ENCODE measurements at regions of chr6 and their contacts with region 1.

Region 1: GRCh38 chr6:26157977-26158648 is 70.9 kb downstream of the HFE start:
- DNase-seq: peak; percentile 92
- H3K4me3 Mint-ChIP-seq: peak overlapping the region; percentile 79
- H3K27ac Mint-ChIP-seq: peak overlapping the region; percentile 97
- H3K4me1 Mint-ChIP-seq: peaks cover 50% of the 10 kb centered on the region
- H3K27me3 Mint-ChIP-seq: peaks cover 13% of the 10 kb centered on the region

Region 2: DNA sequence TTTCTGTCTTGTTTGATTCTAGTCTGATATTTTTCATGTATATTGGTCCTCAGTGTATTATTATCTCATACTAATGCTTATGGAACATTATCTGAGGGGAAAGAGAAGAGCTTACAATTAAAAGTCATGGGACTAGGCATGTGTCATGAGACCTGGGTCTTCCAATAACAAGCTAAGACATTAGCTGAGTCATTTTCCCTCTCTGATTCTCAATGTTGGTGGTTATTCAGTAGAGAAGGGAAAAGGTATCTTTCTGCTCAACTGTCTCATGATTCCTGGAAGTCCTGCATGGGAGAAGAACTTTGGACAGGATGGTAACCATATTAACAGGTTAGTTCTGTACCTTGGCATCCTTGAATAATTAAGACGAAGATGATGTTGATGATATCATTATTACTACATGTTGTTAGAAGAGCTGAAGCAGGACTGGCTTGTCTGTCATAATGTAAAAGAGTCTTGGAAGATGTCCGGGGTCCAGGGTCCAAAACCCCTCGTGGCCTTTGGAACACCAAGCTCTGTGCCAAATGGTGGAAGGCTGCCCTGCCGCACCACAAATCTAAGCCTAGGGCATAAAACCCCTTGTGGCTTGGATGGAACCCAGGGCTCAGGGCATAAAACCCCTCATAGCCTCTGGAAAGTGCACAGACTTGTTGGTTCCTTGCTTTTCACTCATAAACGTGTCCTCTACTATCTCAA is 176.4 kb before region 1 on chr6:
- CTCF ChIA-PET with region 1: no interaction called
- intact Hi-C with region 1: no loop called
- DNase-seq: no peak
- H3K4me3 Mint-ChIP-seq: no peak overlapping the region
- H3K27ac Mint-ChIP-seq: peak overlapping the region; percentile 17
- H3K4me1 Mint-ChIP-seq: peaks cover 23% of the 10 kb centered on the region
- H3K27me3 Mint-ChIP-seq: no peaks in the 10 kb centered on the region

Region 3: DNA sequence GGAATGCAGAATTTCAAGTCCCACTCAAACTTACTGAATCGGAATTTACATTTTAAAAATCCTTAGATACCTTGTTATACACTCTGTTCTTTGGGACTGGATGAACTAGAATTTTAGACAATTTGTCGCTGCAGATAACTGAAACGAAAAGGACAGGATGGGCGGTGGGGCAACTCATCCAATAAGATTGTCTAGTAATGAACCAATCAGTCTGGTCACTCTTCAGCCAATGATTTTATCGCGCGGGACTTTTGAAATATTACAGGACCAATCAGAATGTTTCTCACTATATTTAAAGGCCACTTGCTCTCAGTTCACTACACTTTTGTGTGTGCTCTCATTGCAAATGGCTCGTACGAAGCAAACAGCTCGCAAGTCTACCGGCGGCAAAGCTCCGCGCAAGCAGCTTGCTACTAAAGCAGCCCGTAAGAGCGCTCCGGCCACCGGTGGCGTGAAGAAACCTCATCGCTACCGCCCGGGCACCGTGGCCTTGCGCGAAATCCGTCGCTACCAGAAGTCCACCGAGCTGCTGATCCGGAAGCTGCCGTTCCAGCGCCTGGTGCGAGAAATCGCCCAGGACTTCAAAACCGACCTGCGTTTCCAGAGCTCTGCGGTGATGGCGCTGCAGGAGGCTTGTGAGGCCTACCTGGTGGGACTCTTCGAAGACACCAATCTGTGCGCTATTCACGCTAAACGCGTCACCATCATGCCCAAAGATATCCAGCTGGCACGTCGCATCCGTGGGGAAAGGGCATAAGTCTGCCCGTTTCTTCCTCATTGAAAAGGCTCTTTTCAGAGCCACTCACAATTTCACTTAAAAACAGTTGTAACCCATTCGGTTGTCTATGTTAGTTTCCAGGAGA is 112.8 kb before region 1 on chr6:
- CTCF ChIA-PET with region 1: no interaction called
- intact Hi-C with region 1: loop called (anchors 1 kb)
- DNase-seq: peak; percentile 84
- H3K4me3 Mint-ChIP-seq: peak overlapping the region; percentile 83
- H3K27ac Mint-ChIP-seq: peak overlapping the region; percentile 99
- H3K4me1 Mint-ChIP-seq: peaks cover 13% of the 10 kb centered on the region
- H3K27me3 Mint-ChIP-seq: no peaks in the 10 kb centered on the region

Region 4: DNA sequence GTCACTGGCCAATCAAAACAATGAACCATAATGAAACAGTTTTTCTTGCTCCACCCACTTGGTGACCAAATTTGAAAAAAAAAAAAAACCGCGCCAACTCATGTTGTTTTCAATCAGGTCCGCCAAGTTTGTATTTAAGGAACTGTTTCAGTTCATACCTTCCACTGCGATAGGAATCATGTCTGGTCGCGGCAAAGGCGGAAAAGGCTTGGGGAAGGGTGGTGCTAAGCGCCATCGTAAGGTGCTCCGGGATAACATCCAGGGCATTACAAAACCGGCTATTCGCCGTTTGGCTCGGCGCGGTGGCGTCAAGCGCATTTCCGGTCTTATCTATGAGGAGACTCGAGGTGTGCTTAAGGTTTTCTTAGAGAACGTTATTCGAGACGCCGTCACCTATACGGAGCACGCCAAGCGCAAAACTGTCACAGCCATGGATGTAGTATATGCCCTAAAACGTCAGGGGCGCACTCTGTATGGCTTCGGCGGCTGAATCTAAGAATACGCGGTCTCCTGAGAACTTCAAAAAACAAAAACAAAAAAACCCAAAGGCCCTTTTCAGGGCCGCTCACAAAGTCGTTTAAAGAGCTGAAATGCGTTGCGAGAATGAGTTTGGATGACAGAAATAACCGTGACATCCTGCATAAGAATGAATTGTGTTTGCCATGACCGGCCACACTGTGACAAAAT is 54.2 kb before region 1 on chr6:
- CTCF ChIA-PET with region 1: no interaction called
- intact Hi-C with region 1: loop called (anchors 1 kb)
- DNase-seq: peak; percentile 87
- H3K4me3 Mint-ChIP-seq: peak overlapping the region; percentile 80
- H3K27ac Mint-ChIP-seq: peak overlapping the region; percentile 94
- H3K4me1 Mint-ChIP-seq: peaks cover 18% of the 10 kb centered on the region
- H3K27me3 Mint-ChIP-seq: peaks cover 2% of the 10 kb centered on the region

Region 5: GRCh38 chr6:26196846-26197648 is 38.9 kb after region 1 on chr6:
- CTCF ChIA-PET with region 1: no interaction called
- intact Hi-C with region 1: loop called (anchors 1 kb)
- DNase-seq: peak; percentile 86
- H3K4me3 Mint-ChIP-seq: peak overlapping the region; percentile 96
- H3K27ac Mint-ChIP-seq: peak overlapping the region; percentile 99
- H3K4me1 Mint-ChIP-seq: peaks cover 36% of the 10 kb centered on the region
- H3K27me3 Mint-ChIP-seq: peaks cover 5% of the 10 kb centered on the region

Region 6: DNA sequence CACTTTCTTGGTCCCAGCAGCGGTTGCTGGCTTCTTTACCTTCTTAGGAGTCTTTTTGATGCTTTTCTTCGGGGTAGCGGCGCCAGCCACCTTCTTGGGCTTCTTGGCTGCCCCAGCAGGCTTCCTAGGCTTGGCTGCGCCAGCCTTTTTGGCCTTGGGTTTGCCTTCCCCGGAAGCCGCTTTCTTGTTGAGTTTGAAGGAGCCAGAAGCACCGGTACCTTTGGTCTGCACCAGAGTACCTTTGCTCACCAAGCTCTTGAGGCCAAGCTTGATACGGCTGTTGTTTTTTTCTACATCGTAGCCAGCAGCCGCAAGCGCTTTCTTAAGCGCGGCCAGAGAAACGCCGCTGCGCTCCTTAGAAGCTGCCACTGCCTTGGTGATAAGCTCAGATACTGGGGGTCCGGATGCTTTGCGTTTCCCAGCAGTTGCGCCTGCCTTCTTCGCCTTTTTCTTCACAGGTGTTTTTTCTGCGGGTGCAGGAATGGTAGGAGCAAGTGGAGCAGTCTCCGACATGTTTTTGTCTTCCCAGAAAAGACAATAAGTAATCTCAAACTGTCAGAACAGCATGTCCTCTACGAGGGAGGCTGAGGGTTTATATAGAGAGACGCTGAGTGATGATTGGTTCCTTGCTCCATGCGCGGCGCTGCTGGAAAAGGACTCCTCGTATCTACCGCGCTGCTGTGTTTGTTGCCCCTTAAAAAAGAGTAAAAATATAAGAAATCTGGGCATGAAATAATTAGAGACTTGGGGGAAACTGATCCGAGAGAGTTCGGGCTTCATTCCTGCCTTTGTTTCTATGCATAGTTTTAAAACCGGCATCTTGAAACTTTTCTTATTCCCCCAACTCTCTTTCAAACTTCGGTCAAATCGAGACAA is 76.5 kb after region 1 on chr6:
- CTCF ChIA-PET with region 1: no interaction called
- intact Hi-C with region 1: loop called (anchors 1 kb)
- DNase-seq: peak; percentile 90
- H3K4me3 Mint-ChIP-seq: peak overlapping the region; percentile 83
- H3K27ac Mint-ChIP-seq: peak overlapping the region; percentile 100
- H3K4me1 Mint-ChIP-seq: peaks cover 28% of the 10 kb centered on the region
- H3K27me3 Mint-ChIP-seq: peaks cover 3% of the 10 kb centered on the region

Region 7: GRCh38 chr6:26501482-26501986 is 343.4 kb after region 1 on chr6:
- CTCF ChIA-PET with region 1: no interaction called
- intact Hi-C with region 1: no loop called
- DNase-seq: peak; percentile 56
- H3K4me3 Mint-ChIP-seq: peak overlapping the region; percentile 73
- H3K27ac Mint-ChIP-seq: no peak overlapping the region
- H3K4me1 Mint-ChIP-seq: peaks cover 17% of the 10 kb centered on the region
- H3K27me3 Mint-ChIP-seq: peaks cover 32% of the 10 kb centered on the region

Region 8: DNA sequence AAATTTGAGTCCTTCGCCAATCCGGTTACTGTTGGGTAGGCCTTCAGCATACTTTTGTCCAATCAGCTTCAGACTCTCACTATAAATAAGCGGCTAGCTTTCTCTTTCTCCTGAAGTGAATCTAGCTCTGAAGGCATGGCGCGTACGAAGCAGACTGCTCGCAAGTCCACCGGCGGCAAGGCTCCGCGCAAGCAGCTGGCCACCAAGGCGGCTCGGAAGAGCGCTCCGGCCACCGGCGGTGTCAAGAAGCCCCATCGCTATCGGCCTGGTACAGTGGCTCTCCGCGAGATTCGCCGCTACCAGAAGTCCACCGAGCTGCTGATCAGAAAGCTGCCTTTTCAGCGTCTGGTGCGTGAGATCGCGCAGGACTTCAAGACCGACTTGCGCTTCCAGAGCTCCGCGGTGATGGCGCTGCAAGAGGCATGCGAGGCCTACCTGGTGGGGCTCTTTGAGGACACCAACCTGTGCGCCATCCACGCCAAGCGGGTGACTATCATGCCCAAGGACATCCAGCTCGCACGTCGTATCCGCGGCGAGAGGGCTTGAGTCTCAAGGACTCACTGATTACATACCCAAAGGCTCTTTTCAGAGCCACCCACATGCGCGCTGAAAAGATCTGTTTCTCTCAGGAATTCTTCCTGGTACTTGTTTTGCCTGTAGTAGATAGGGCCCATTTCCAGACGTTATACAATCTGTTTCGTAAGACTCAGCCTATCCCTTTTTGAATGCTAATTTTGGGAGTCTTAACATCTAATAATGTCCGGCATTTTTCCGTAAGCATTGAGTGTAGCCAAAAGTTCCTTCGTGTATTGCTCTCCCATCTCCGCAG is 1652.0 kb after region 1 on chr6:
- CTCF ChIA-PET with region 1: no interaction called
- intact Hi-C with region 1: loop called (anchors 2 kb)
- DNase-seq: peak; percentile 81
- H3K4me3 Mint-ChIP-seq: peak overlapping the region; percentile 93
- H3K27ac Mint-ChIP-seq: peak overlapping the region; percentile 95
- H3K4me1 Mint-ChIP-seq: peaks cover 41% of the 10 kb centered on the region
- H3K27me3 Mint-ChIP-seq: peaks cover 3% of the 10 kb centered on the region